ENCODE measurements at regions of chr12 and their contacts with region 1.

Region 1: GRCh38 chr12:124917135-124917840 is 2.8 kb upstream of the UBC start:
- DNase-seq: peak; percentile 97
- H3K4me3 Mint-ChIP-seq: peak overlapping the region; percentile 98
- H3K27ac Mint-ChIP-seq: peak overlapping the region; percentile 100
- H3K4me1 Mint-ChIP-seq: peaks cover 74% of the 10 kb centered on the region
- H3K27me3 Mint-ChIP-seq: peaks cover 25% of the 10 kb centered on the region
- CTCF ChIP-seq: no peak

Region 2: DNA sequence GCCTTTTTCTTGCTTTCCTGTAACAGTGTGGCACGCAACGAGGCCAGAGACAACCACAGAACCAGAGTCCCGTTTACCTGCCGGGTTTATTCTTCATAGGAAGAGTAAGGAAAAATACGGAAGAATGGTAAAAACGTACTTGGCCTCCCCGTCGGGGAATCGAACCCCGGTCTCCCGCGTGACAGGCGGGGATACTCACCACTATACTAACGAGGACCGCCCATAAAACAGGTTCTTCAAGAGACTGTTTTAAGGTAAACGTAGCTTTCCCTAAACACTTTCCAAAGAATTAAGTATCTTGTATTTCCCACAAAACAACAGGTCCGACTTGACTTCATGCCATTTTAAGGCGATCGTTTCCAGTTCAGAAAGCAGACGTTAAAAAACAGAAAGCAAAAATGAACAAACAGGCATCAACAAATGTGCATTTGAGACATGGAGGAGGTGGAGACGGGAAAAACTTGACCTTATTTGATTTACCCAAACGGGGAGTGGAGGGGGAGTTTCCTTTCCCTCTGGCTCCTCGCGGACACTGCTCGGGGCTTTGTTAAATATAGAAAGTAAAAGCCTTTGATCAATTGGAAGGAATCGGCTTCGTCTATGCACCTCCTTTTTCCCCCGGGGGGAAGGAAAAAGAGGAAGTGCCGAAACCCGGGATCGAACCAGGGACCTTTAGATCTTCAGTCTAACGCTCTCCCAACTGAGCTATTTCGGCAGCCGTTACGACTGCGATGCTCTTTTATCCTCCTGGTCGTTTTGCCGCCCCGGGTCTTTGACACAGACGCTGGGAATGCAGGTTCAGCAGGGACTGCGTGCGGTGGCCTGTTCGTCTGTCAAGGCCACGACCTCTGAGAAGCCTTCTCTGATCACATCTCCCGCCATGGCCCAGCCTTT is 10.2 kb after region 1 on chr12:
- CTCF ChIA-PET with region 1: interaction called, 8 read pairs
- intact Hi-C with region 1: loop called (anchors 1 kb)
- DNase-seq: peak; percentile 95
- H3K4me3 Mint-ChIP-seq: peak overlapping the region; percentile 69
- H3K27ac Mint-ChIP-seq: peak overlapping the region; percentile 100
- H3K4me1 Mint-ChIP-seq: peaks cover 37% of the 10 kb centered on the region
- H3K27me3 Mint-ChIP-seq: peaks cover 16% of the 10 kb centered on the region
- CTCF ChIP-seq: no peak

Region 3: GRCh38 chr12:124940549-124941527 is 23.6 kb after region 1 on chr12:
- CTCF ChIA-PET with region 1: interaction called, 62 read pairs
- intact Hi-C with region 1: no loop called
- DNase-seq: peak; percentile 93
- H3K4me3 Mint-ChIP-seq: no peak overlapping the region
- H3K27ac Mint-ChIP-seq: no peak overlapping the region
- H3K4me1 Mint-ChIP-seq: peaks cover 17% of the 10 kb centered on the region
- H3K27me3 Mint-ChIP-seq: no peaks in the 10 kb centered on the region
- CTCF ChIP-seq: peak; percentile 80